ENCODE measurements at regions of chr10 and their contacts with region 1.

Region 1: GRCh38 chr10:66971367-66971766 is 45.5 kb downstream of the LRRTM3 start:
- DNase-seq: no peak
- ATAC-seq: no peak
- H3K4me3 ChIP-seq: no peak overlapping the region
- H3K27ac ChIP-seq: no peak overlapping the region
- H3K4me1 ChIP-seq: no peaks in the 10 kb centered on the region
- H3K27me3 ChIP-seq: 0 out of 2 replicates have a peak, but pooled peaks cover 14% of the 10 kb centered on the region
- CTCF ChIP-seq: no peak

Region 2: GRCh38 chr10:66762218-66762729 is 209.1 kb before region 1 on chr10:
- CTCF ChIA-PET with region 1: no interaction called
- POLR2A ChIA-PET with region 1: no interaction called
- intact Hi-C with region 1: no loop called
- DNase-seq: no peak
- ATAC-seq: no peak
- H3K4me3 ChIP-seq: no peak overlapping the region
- H3K27ac ChIP-seq: no peak overlapping the region
- H3K4me1 ChIP-seq: no peaks in the 10 kb centered on the region
- H3K27me3 ChIP-seq: no peaks in the 10 kb centered on the region
- CTCF ChIP-seq: no peak

Region 3: DNA sequence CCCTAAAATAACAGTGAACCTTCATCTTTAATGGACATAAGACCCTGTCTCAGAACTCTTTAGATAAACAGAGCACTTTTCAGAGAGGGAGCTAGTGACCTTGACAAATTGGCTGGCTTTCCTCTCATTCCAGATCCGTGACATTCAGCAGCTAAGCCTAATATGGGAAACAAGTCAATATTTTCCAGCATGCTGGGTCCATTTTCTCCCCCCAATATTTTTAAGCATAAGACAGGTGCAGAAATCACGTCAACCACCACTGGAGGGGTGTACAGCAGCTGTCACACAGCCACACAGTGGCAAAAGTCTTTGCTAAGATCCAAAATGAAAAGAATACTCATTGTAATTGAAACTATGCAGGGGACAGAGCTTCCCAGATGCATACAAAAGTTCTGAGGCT is 19.5 kb before region 1 on chr10:
- CTCF ChIA-PET with region 1: no interaction called
- POLR2A ChIA-PET with region 1: no interaction called
- intact Hi-C with region 1: loop called (anchors 2 kb)
- DNase-seq: no peak
- ATAC-seq: no peak
- H3K4me3 ChIP-seq: no peak overlapping the region
- H3K27ac ChIP-seq: no peak overlapping the region
- H3K4me1 ChIP-seq: no peaks in the 10 kb centered on the region
- H3K27me3 ChIP-seq: peaks cover 52% of the 10 kb centered on the region
- CTCF ChIP-seq: no peak

Region 4: DNA sequence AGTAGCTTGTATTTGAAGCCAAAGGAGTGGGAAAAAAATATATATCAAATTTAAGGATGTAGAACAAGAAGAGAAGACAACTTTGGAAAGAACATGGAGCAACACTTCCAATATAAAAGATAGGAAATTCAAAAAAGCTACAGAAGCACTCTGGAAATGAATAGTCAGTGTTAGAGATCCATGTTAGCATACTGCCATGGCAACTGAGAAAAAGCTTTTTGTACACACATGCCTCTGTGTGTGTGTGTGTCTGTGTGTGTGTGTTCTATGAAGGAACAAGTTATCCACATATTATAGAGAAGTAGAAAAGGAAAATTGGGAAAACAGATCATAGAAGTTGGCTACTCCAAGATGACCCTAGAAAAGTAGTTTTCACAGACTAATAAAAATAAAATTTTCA is 50.7 kb after region 1 on chr10:
- CTCF ChIA-PET with region 1: no interaction called
- POLR2A ChIA-PET with region 1: interaction called, 12 read pairs
- intact Hi-C with region 1: no loop called
- DNase-seq: no peak
- ATAC-seq: no peak
- H3K4me3 ChIP-seq: no peak overlapping the region
- H3K27ac ChIP-seq: no peak overlapping the region
- H3K4me1 ChIP-seq: no peaks in the 10 kb centered on the region
- H3K27me3 ChIP-seq: peaks cover 52% of the 10 kb centered on the region
- CTCF ChIP-seq: no peak